Activated CD8-positive, alpha-beta T cell treated with anti-CD3 and anti-CD28 coated beads, Interleukin-2, amount 10 ng/mL, durations not matched to agents 7 days and 5 days (primary cell): ENCODE measurements at regions of chr6 and their contacts with region 1.

Region 1: DNA sequence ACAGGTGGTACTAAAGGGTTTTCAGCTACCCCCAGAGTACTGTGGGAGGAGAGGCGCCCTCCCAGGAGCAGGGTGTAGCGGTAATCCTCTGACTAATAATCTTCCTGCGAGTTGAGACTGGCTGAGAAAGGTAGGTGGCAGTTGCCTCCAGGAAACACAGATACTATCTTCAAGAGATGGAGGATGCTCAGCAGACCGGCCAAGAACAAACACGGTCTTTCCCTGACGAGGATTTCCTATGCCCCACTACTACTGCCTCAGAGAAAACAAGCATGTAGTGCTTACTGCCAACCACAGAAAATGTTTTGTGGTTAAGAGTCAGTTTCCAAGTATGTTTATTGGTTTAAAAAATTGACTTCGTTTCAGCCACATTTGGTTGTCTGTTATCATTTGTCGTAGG is 26.8 kb downstream of the C6orf89 start:
- DNase-seq: peak; percentile 83
- ATAC-seq: peak; percentile 94
- H3K4me3 Mint-ChIP-seq: peak overlapping the region; percentile 72
- H3K27ac Mint-ChIP-seq: peak overlapping the region; percentile 87
- H3K4me1 Mint-ChIP-seq: peaks cover 57% of the 10 kb centered on the region
- H3K27me3 Mint-ChIP-seq: no peaks in the 10 kb centered on the region

Region 2: GRCh38 chr6:36752886-36753506 is 159.6 kb before region 1 on chr6:
- CTCF ChIA-PET with region 1: no interaction called
- POLR2A ChIA-PET with region 1: no interaction called
- DNase-seq: no peak
- ATAC-seq: no peak
- H3K4me3 Mint-ChIP-seq: no peak overlapping the region
- H3K27ac Mint-ChIP-seq: peak overlapping the region; percentile 83
- H3K4me1 Mint-ChIP-seq: peaks cover 61% of the 10 kb centered on the region
- H3K27me3 Mint-ChIP-seq: no peaks in the 10 kb centered on the region

Region 3: GRCh38 chr6:36839749-36840431 is 72.7 kb before region 1 on chr6:
- CTCF ChIA-PET with region 1: no interaction called
- POLR2A ChIA-PET with region 1: no interaction called
- DNase-seq: peak; percentile 43
- ATAC-seq: peak; percentile 78
- H3K4me3 Mint-ChIP-seq: peak overlapping the region; percentile 61
- H3K27ac Mint-ChIP-seq: no peak overlapping the region
- H3K4me1 Mint-ChIP-seq: peaks cover 17% of the 10 kb centered on the region
- H3K27me3 Mint-ChIP-seq: peaks cover 44% of the 10 kb centered on the region

Region 4: GRCh38 chr6:36927691-36928546 is 15.3 kb after region 1 on chr6:
- CTCF ChIA-PET with region 1: interaction called, 19 read pairs
- POLR2A ChIA-PET with region 1: interaction called, 3 read pairs
- DNase-seq: no peak
- ATAC-seq: no peak
- H3K4me3 Mint-ChIP-seq: no peak overlapping the region
- H3K27ac Mint-ChIP-seq: no peak overlapping the region
- H3K4me1 Mint-ChIP-seq: peaks cover 33% of the 10 kb centered on the region
- H3K27me3 Mint-ChIP-seq: no peaks in the 10 kb centered on the region

Region 5: GRCh38 chr6:36985808-36986703 is 73.5 kb after region 1 on chr6 and contains the start of gene MTCH1:
- CTCF ChIA-PET with region 1: interaction called, 4 read pairs
- POLR2A ChIA-PET with region 1: interaction called, 13 read pairs
- DNase-seq: peak; percentile 89
- ATAC-seq: peak; percentile 92
- H3K4me3 Mint-ChIP-seq: peak within 1 kb of the TSS; percentile 98
- H3K27ac Mint-ChIP-seq: peak within 1 kb of the TSS; percentile 96
- H3K4me1 Mint-ChIP-seq: peaks cover 25% of the 10 kb centered on the region
- H3K27me3 Mint-ChIP-seq: peaks cover 12% of the 10 kb centered on the region
- total RNA-seq, gene MTCH1: 117 to 122 TPM

Region 6: DNA sequence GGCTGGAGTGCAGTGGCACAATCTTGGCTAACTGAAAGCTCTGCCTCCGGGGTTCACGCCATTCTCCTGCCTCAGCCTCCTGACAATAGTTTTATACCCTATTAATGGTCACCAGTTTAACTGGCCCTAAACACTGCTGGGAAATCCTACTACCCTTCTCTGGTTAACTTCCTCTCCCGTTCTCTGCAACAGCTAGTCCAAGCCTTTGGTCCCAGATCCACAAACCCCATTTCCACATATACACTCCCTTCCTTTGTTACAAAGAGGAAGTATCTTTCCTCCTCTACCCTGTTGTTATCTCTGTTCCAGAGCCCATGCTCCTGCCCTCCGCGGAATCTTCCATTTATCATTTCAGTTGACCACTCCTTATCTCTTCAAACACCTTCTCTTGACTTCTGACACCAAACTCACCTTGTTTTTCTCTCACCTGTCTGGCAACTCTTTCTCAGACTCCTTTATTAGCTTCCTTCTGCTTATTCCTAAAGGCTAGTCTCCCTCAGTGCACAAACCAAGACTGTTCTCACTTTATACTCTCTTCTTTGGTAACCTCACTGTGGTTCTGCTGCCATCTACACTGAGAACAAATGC is 319.9 kb after region 1 on chr6:
- CTCF ChIA-PET with region 1: no interaction called
- POLR2A ChIA-PET with region 1: no interaction called
- DNase-seq: no peak
- ATAC-seq: no peak
- H3K4me3 Mint-ChIP-seq: no peak overlapping the region
- H3K27ac Mint-ChIP-seq: no peak overlapping the region
- H3K4me1 Mint-ChIP-seq: peaks cover 3% of the 10 kb centered on the region
- H3K27me3 Mint-ChIP-seq: no peaks in the 10 kb centered on the region